A673 (cell line): ENCODE measurements at regions of chr3 and their contacts with region 1.

Region 1: GRCh38 chr3:157136647-157137387 is 23.1 kb downstream of the CCNL1 start:
- DNase-seq: no peak
- H3K4me3 ChIP-seq: no peak overlapping the region
- H3K27ac ChIP-seq: peak overlapping the region; percentile 64
- H3K4me1 ChIP-seq: peaks cover 27% of the 10 kb centered on the region
- H3K27me3 ChIP-seq: no peaks in the 10 kb centered on the region
- CTCF ChIP-seq: no peak

Region 2: DNA sequence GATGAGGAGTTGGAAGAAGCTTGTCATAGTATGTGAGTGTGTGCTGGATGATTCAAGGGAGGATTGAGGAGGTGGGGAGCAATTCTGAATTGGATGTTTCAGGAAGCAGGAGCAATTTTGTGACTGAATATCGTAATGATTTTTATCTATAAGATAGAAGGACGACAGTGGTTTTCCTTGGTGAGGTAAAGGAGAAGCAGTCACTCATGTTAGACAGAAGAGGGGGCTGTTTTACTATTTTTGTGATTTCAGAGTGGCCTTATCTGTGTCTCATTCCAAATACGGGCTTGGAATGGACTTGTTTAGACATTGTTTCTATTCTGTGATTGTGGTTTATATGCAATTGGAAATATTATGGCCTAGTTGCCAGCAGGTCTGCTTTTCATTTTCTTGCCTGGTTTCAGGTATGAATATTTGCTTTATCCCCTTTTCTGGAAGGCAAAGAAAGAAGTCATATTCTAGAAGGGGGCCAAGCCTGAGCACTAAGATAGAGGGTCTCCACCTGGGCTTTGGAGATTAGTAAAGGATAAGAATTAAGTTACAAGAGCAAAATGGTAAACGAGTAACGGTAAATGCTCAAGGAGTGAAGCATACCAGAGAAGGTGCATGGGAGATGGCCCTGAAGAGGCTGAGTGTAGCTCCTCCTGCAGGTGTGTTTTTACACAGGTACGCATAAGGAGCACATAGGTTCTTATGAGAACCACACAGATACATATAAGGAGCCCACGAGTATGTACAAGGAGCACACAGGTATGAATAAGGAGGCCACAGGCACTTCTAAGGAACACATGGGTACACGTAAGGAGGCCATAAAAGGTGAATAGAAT is 1141.1 kb before region 1 on chr3:
- CTCF ChIA-PET with region 1: no interaction called
- POLR2A ChIA-PET with region 1: no interaction called
- intact Hi-C with region 1: loop called (anchors 5 kb)
- DNase-seq: peak; percentile 65
- H3K4me3 ChIP-seq: no peak overlapping the region
- H3K27ac ChIP-seq: no peak overlapping the region
- H3K4me1 ChIP-seq: no peaks in the 10 kb centered on the region
- H3K27me3 ChIP-seq: no peaks in the 10 kb centered on the region
- CTCF ChIP-seq: peak; percentile 69

Region 3: GRCh38 chr3:156449712-156450574 is 686.9 kb before region 1 on chr3:
- CTCF ChIA-PET with region 1: no interaction called
- POLR2A ChIA-PET with region 1: no interaction called
- intact Hi-C with region 1: loop called (anchors 2 kb)
- DNase-seq: peak; percentile 39
- H3K4me3 ChIP-seq: no peak overlapping the region
- H3K27ac ChIP-seq: no peak overlapping the region
- H3K4me1 ChIP-seq: peaks cover 14% of the 10 kb centered on the region
- H3K27me3 ChIP-seq: no peaks in the 10 kb centered on the region
- CTCF ChIP-seq: peak; percentile 74

Region 4: DNA sequence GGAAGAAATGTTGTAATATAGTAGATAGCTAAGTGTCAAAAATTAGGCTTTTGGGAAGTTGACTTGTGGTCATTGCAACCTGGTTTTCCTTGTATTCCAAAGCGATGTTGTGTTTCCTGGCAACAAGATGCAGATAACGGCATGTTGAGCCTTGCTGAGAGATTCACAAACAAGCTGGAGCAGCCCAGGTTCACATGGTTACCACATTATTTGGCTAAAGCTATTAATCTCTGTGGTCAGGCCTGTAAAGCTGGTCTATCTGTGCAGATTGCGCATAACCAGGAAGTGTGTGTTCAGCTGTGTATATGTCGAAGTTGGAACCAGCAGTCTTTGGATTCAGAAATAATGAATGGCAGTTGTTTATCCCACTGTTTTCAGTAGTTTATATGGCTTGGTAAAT is 455.8 kb before region 1 on chr3:
- CTCF ChIA-PET with region 1: no interaction called
- POLR2A ChIA-PET with region 1: no interaction called
- intact Hi-C with region 1: loop called (anchors 5 kb)
- DNase-seq: peak; percentile 48
- H3K4me3 ChIP-seq: peak overlapping the region; percentile 89
- H3K27ac ChIP-seq: peak overlapping the region; percentile 9
- H3K4me1 ChIP-seq: peaks cover 85% of the 10 kb centered on the region
- H3K27me3 ChIP-seq: no peaks in the 10 kb centered on the region
- CTCF ChIP-seq: no peak

Region 5: GRCh38 chr3:156997351-156997750 is 139.5 kb before region 1 on chr3:
- CTCF ChIA-PET with region 1: no interaction called
- POLR2A ChIA-PET with region 1: no interaction called
- intact Hi-C with region 1: no loop called
- DNase-seq: peak; percentile 5
- H3K4me3 ChIP-seq: no peak overlapping the region
- H3K27ac ChIP-seq: no peak overlapping the region
- H3K4me1 ChIP-seq: no peaks in the 10 kb centered on the region
- H3K27me3 ChIP-seq: no peaks in the 10 kb centered on the region
- CTCF ChIP-seq: no peak

Region 6: GRCh38 chr3:157088601-157089454 is 48.0 kb before region 1 on chr3:
- CTCF ChIA-PET with region 1: interaction called, 14 read pairs
- POLR2A ChIA-PET with region 1: no interaction called
- intact Hi-C with region 1: no loop called
- DNase-seq: peak; percentile 96
- H3K4me3 ChIP-seq: peak overlapping the region; percentile 47
- H3K27ac ChIP-seq: peak overlapping the region; percentile 92
- H3K4me1 ChIP-seq: peaks cover 43% of the 10 kb centered on the region
- H3K27me3 ChIP-seq: no peaks in the 10 kb centered on the region
- CTCF ChIP-seq: no peak; the same call in 1 of the 2 replicates